RWPE1 (cell line): ENCODE measurements at regions of chr17 and their contacts with region 1.

Region 1: DNA sequence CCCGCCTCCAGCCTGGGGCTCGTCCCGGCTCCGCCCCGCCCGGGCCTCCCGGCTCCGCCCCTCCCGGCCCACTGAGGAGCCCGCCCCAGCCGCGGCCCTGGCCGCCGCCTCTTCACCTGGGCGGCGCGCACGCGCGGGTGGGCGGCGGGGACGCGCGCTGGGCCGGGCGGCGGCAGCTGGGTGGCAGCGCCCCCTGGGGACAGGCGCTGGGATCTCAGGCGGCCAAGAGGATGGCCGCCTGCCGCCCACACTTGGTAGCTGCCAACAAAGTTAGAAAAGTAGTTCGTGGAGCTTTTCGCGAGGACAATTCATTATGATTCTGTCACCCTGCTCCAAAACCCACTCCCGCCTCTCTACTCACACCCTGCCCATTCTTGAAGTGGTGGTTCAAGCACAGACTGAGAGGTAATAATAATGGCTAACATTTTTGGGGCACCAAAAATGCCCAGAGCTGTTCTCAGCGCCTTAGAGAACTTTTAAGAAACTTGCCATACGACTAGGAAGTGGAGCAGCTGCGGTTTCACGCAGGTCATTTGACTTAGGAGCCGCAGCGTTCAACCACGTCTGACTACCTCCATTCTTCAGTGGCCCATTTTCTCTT is 340 bp upstream of the MYO1D start:
- DNase-seq: peak; percentile 90
- H3K27ac ChIP-seq: peak overlapping the region; percentile 62
- CTCF ChIP-seq: peak; percentile 96

Region 2: GRCh38 chr17:32777436-32777835 is 99.8 kb before region 1 on chr17:
- CTCF ChIA-PET with region 1: interaction called, 48 read pairs
- POLR2A ChIA-PET with region 1: no interaction called
- DNase-seq: peak; percentile 35
- H3K27ac ChIP-seq: no peak overlapping the region
- CTCF ChIP-seq: no peak

Region 3: GRCh38 chr17:32783602-32784001 is 93.7 kb before region 1 on chr17:
- CTCF ChIA-PET with region 1: interaction called, 48 read pairs
- POLR2A ChIA-PET with region 1: no interaction called
- DNase-seq: peak; percentile 46
- H3K27ac ChIP-seq: no peak overlapping the region
- CTCF ChIP-seq: peak; percentile 65